ENCODE measurements at regions of chr4 and their contacts with region 1.

Region 1: GRCh38 chr4:51943221-51943934 is 76.8 kb downstream of the LRRC66 start:
- DNase-seq: peak; percentile 88
- ATAC-seq: peak; percentile 69
- H3K4me3 ChIP-seq: peak overlapping the region; percentile 50
- H3K27ac ChIP-seq: peak overlapping the region; percentile 48
- H3K4me1 ChIP-seq: peaks cover 27% of the 10 kb centered on the region
- H3K27me3 ChIP-seq: no peaks in the 10 kb centered on the region
- CTCF ChIP-seq: no peak

Region 2: DNA sequence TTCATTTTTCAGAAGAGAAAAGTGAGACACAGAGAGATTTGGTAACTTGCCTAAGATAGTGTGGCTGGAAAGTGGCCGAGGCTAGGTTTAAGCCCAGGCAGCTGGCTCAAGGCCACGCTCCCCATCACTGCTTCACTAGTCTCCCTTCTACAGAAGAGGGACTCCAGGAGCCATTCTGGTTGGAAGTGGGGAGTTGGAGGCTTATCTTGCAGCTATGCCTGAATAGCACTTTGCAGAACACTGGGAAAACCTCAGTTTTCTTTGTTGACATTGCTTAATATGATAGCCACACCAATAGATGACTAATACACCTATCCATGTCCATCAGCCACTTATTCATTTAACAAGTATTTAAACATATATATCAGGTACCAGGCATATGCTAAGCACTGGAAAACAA is 58.2 kb after region 1 on chr4:
- CTCF ChIA-PET with region 1: no interaction called
- POLR2A ChIA-PET with region 1: no interaction called
- intact Hi-C with region 1: loop called (anchors 2 kb)
- DNase-seq: peak; percentile 88
- ATAC-seq: peak; percentile 92
- H3K4me3 ChIP-seq: no peak overlapping the region
- H3K27ac ChIP-seq: no peak overlapping the region
- H3K4me1 ChIP-seq: peaks cover 26% of the 10 kb centered on the region
- H3K27me3 ChIP-seq: no peaks in the 10 kb centered on the region
- CTCF ChIP-seq: no peak